GM12878 (cell line): ENCODE measurements at regions of chr19 and their contacts with region 1.

Region 1: GRCh38 chr19:2561895-2562294 is 86.0 kb downstream of the GADD45B start:
- DNase-seq: peak; percentile 92
- ATAC-seq: peak; percentile 89
- H3K4me3 ChIP-seq: peak overlapping the region; percentile 61
- H3K27ac ChIP-seq: peak overlapping the region; percentile 98
- H3K4me1 ChIP-seq: peaks cover 28% of the 10 kb centered on the region
- H3K27me3 ChIP-seq: no peaks in the 10 kb centered on the region
- CTCF ChIP-seq: no peak
- EP300 ChIP-seq: peak; percentile 87
- POLR2A ChIP-seq: peak; percentile 65; the same call in 1 of the 2 replicates
- RAD21 ChIP-seq: peak; percentile 31; the same call in 1 of the 2 replicates

Region 2: DNA sequence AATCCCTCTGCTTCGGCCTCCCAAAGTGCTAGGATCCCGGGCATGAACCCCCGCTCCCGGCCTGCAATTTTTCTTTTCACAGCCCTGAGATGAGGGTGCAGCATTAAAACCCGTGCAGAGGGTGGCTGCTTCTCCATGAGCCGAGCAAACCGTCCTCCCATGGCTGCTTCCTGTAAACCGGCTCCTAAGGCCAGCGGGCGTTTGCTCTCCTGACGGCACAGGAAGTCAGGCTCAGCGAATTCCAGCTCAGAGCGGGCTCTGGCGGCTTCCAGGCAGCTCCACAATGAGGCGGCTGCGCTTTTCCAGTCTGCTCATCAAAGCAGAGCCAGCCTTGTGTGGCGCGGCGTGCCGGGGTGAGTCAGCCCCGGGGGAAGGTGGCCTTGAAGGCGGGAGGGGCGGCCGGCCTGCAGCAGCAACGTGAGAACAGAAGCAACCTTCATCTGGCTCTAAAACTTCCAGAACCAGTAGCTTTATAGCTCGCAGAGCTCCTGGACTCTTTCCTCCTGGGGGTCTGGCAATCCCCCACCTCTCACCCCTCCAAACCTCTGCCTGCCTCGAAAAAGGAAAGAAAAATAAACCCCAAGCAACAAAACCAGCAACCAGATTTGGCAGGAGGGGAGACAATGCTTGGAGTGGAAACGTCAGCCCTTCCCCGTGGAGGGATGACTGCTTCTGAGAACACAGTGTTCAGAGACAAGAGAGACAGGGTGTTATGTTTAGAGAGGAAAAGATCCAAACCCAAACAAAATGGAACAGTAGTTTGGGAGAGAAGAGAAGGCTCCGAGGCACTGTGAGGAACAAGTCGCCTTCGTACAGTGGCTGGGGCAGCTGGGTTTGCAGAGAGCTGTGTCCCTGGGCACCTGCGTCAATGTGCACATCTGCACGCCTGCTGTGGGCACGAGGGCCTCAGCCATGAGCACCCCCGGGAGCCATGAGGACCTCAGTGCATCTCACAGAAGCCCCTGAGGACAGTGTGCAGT is 18.1 kb before region 1 on chr19:
- CTCF ChIA-PET with region 1: interaction called, 12 read pairs
- POLR2A ChIA-PET with region 1: interaction called, 7 read pairs
- RAD21 ChIA-PET with region 1: interaction called, 29 read pairs
- SMC1A ChIA-PET with region 1: interaction called, 6 read pairs
- in situ Hi-C with region 1: no loop called
- intact Hi-C with region 1: no loop called
- DNase-seq: no peak
- ATAC-seq: peak; percentile 82
- H3K4me3 ChIP-seq: peak overlapping the region; percentile 53
- H3K27ac ChIP-seq: peak overlapping the region; percentile 64
- H3K4me1 ChIP-seq: peaks cover 35% of the 10 kb centered on the region
- H3K27me3 ChIP-seq: no peaks in the 10 kb centered on the region
- CTCF ChIP-seq: peak in 1 of 3 experiments; percentile 18; a peak in 1 of 6 replicates
- EP300 ChIP-seq: no peak
- POLR2A ChIP-seq: peak; percentile 41; the same call in 1 of the 2 replicates
- RAD21 ChIP-seq: 0 out of 2 replicates have a peak, but pooled peaks have one; percentile 3

Region 3: DNA sequence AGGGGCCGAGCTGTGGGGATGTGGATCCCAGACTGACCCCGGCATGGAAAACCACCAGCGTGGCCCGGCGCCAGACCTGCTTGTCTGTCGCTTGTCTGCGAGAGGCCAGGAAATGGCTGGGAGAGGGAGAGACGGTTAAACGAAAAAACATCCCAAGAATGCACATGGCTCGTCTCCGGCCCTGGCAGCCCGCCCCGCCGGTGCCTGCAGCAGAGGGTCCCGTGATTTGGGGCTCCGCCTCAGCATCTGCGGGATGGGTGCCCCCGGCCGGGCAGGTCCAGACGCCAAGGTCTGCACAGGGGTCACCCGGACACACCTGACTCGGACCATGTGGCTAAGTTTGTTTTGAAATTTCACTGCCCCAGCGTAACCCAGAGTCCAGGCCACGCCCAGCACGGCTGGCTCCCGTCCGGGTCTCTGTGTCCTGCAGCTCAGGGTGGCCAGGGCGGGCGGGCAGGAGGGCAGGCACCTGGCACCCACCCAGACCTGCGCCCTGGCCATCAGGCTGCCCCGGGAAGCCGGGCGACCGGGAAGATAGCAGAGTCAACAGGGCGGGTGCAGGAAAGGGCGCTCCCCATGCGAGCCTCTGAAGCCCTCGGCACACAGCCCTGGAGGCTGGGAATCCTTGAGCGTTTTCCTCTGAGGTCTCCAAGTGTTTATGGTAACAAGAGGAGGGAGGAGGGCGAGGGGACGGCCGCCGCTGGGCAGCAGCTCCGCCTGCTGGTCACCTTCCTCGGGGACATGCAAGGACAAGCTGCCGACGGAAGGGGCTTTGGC is 17.2 kb after region 1 on chr19:
- CTCF ChIA-PET with region 1: interaction called, 6 read pairs
- POLR2A ChIA-PET with region 1: interaction called, 3 read pairs
- RAD21 ChIA-PET with region 1: interaction called, 17 read pairs
- SMC1A ChIA-PET with region 1: interaction called, 5 read pairs
- in situ Hi-C with region 1: no loop called
- intact Hi-C with region 1: no loop called
- DNase-seq: no peak
- ATAC-seq: peak; percentile 90
- H3K4me3 ChIP-seq: no peak overlapping the region
- H3K27ac ChIP-seq: no peak overlapping the region
- H3K4me1 ChIP-seq: peaks cover 7% of the 10 kb centered on the region; the same call in 1 of the 2 replicates
- H3K27me3 ChIP-seq: no peaks in the 10 kb centered on the region
- CTCF ChIP-seq: peak; percentile 43 to 79 (median 72); a peak in 5 of 6 replicates
- EP300 ChIP-seq: no peak
- POLR2A ChIP-seq: no peak
- RAD21 ChIP-seq: peak; percentile 78

Region 4: GRCh38 chr19:2594319-2594718 is 32.4 kb after region 1 on chr19:
- CTCF ChIA-PET with region 1: interaction called, 7 read pairs
- POLR2A ChIA-PET with region 1: interaction called, 30 read pairs
- RAD21 ChIA-PET with region 1: interaction called, 67 read pairs
- SMC1A ChIA-PET with region 1: interaction called, 32 read pairs
- in situ Hi-C with region 1: no loop called
- intact Hi-C with region 1: loop called (anchors 1 kb)
- DNase-seq: peak; percentile 60
- ATAC-seq: peak; percentile 4; the same call in 1 of the 3 replicates
- H3K4me3 ChIP-seq: no peak overlapping the region
- H3K27ac ChIP-seq: peak overlapping the region; percentile 49
- H3K4me1 ChIP-seq: peaks cover 23% of the 10 kb centered on the region
- H3K27me3 ChIP-seq: no peaks in the 10 kb centered on the region
- CTCF ChIP-seq: no peak
- EP300 ChIP-seq: peak; percentile 53 to 66; a peak in 2 of 4 replicates
- POLR2A ChIP-seq: no peak
- RAD21 ChIP-seq: no peak

Region 5: DNA sequence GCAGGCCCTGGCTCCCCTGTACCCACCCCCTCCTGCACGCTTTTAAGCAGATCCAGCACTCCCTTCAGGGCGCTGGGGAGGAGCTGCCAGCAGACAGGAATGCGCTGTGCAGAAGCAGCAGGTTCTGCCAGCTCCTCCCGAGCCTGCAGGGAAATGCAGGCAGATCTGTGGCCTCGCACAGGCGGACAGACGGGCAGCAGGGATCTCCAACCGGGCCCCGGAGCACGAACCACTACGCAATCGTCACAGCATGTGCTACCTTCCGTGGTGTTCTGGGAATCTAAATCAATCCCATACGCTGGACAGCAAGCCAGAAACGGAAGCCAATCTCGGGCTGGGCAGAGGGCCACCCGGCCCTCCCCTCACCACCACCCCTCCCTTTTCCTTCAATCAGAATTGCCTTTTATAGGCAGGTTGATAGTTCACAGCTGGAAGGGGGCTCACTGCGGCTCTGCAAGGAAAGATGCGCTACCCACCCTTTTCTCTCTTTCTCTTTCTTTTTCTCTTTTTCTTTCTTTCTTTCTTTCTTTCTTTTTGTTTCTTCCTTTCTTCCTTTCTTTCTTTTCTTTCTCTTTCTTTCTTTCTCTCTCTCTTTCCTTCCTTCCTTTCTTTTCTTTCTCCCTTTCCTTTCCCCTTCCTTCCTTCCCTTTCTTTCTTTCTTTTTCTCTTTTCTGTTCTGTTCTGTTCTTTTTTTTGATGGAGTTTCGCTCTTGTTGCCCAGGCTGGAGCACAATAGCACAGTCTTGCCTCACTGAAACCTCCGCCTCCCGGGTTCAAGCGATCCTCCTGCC is 40.7 kb after region 1 on chr19:
- CTCF ChIA-PET with region 1: interaction called, 3 read pairs
- POLR2A ChIA-PET with region 1: interaction called, 23 read pairs
- RAD21 ChIA-PET with region 1: interaction called, 67 read pairs
- SMC1A ChIA-PET with region 1: interaction called, 43 read pairs
- in situ Hi-C with region 1: no loop called
- intact Hi-C with region 1: no loop called
- DNase-seq: no peak
- ATAC-seq: no peak
- H3K4me3 ChIP-seq: no peak overlapping the region
- H3K27ac ChIP-seq: no peak overlapping the region
- H3K4me1 ChIP-seq: peaks cover 13% of the 10 kb centered on the region; the same call in 1 of the 2 replicates
- H3K27me3 ChIP-seq: no peaks in the 10 kb centered on the region
- CTCF ChIP-seq: no peak
- EP300 ChIP-seq: no peak
- POLR2A ChIP-seq: no peak
- RAD21 ChIP-seq: no peak

Region 6: DNA sequence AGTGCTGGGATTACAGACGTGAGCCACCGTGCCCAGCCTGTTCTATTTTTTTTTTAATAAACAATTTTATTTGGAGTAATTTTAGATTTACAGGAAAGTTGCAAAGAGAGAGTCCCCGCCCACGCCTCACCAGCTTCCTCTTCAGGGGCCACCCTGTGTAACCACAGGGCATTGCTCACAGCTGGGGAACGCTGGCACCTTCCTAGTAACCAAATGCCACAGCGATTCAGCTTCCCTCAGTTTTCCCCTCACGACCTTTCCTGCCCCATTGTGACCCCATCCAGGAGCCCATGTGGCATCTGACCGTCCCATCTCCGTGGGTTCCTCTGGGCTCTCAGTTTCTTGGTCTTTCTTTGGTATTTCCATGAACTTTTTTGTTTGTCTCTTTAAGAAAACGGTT is 56.7 kb after region 1 on chr19:
- CTCF ChIA-PET with region 1: interaction called, 49 read pairs
- POLR2A ChIA-PET with region 1: interaction called, 9 read pairs
- RAD21 ChIA-PET with region 1: interaction called, 14 read pairs
- SMC1A ChIA-PET with region 1: interaction called, 3 read pairs
- in situ Hi-C with region 1: no loop called
- intact Hi-C with region 1: no loop called
- DNase-seq: no peak
- ATAC-seq: no peak
- H3K4me3 ChIP-seq: no peak overlapping the region
- H3K27ac ChIP-seq: peak overlapping the region; percentile 68
- H3K4me1 ChIP-seq: peaks cover 62% of the 10 kb centered on the region
- H3K27me3 ChIP-seq: no peaks in the 10 kb centered on the region
- CTCF ChIP-seq: no peak
- EP300 ChIP-seq: 0 out of 4 replicates have a peak, but pooled peaks of 1 of the 2 experiments have one; percentile 24
- POLR2A ChIP-seq: no peak
- RAD21 ChIP-seq: no peak